ENCODE measurements at regions of chr5 and their contacts with region 1.

Region 1: GRCh38 chr5:179697993-179698934 is 503 bp upstream of the CANX start:
- DNase-seq: peak; percentile 99
- ATAC-seq: peak; percentile 92
- H3K4me3 Mint-ChIP-seq: peak overlapping the region; percentile 89
- H3K27ac Mint-ChIP-seq: peak overlapping the region; percentile 94
- H3K4me1 Mint-ChIP-seq: peaks cover 32% of the 10 kb centered on the region
- H3K27me3 Mint-ChIP-seq: no peaks in the 10 kb centered on the region

Region 2: DNA sequence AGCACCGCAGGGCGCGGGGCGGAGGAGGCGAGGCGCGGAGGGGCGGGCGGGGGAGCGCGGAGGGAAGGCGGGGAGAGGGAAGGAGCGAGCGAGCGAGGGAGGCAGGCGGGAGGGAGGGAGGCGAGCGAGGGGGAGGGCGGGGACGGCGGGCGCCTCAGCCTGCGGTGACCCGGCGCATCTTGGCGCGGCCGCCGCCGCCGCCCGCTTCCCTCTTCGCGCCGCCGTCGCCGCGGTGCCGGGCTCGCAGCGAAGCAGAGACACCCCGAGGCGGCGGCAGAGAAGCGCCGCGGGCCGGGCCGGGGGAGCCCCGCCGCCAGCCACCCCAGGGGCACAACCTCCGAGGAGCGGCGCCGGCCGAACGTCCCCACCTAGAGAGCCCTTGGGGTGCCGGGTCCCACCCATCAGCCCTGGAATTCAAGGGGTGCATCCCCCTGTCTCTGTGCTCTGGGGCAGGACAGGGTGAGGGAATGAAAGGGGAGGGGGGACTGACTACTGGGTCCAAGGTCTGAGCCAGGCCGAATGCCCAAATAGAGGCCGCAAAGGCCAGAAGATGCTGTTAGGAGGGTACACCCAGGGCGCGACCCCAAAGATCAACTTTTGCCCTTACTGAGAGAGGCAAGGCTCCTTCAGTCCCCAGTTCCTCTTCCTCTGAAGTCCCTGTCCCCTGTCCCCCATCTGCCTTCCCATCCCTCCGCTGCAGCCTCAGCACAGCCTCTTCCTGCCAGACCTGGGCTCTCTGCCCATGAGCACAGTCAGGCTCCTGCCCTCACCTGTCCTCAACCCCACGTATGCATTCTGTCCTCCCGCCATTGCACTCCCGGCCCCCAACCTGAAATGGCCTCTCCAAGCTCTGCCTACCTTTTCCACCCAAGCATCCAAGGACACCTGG is 352.6 kb before region 1 on chr5 and contains the start of gene ADAMTS2:
- CTCF ChIA-PET with region 1: no interaction called
- POLR2A ChIA-PET with region 1: no interaction called
- DNase-seq: peak; percentile 22
- ATAC-seq: peak; percentile 50
- H3K4me3 Mint-ChIP-seq: peak within 1 kb of the TSS; percentile 42
- H3K27ac Mint-ChIP-seq: no peak within 1 kb of the TSS
- H3K4me1 Mint-ChIP-seq: peaks cover 5% of the 10 kb centered on the region
- H3K27me3 Mint-ChIP-seq: peaks cover 50% of the 10 kb centered on the region
- total RNA-seq, gene ADAMTS2: not detected

Region 3: DNA sequence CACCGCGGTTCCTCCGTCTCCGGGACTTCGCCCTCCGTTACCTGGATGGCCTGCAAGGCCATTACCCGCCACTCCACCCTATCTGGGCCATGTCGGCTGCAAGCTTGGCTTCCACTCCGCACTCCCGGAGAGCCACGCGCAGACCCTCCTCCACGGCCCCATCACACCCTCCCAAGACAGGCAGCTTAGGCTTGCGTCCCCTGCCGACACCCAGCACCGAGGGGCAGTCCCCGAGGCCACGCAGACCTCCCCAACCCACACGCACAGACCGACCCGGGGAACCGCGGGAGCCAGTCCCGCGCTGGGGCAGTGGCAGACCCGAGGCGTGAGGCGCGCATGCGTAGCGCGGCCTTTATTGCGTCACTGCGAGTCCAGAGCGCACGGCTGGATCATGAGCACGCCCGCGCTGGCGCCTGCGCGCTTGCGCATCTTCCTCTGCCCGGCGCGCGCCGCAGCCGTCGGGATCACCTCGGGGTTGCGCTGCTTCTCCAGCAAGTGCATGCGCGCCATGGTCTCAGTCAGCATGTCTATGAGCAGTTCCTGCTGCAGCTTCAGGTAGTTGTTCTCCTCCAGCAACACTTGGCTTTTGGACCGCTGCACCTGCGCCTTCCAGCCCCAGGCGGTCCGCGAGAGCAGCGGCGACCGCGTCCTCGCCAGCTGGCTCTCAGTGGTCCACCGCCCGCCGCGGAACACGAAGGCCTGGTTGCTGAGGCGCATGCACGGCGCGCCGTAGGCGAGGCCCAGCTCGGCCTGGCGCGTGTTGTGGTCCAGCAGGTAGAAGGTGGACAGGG is 19.8 kb before region 1 on chr5:
- CTCF ChIA-PET with region 1: interaction called, 5 read pairs
- POLR2A ChIA-PET with region 1: interaction called, 22 read pairs
- DNase-seq: peak; percentile 96
- ATAC-seq: peak; percentile 91
- H3K4me3 Mint-ChIP-seq: peak overlapping the region; percentile 95
- H3K27ac Mint-ChIP-seq: peak overlapping the region; percentile 97
- H3K4me1 Mint-ChIP-seq: peaks cover 35% of the 10 kb centered on the region
- H3K27me3 Mint-ChIP-seq: no peaks in the 10 kb centered on the region

Region 4: DNA sequence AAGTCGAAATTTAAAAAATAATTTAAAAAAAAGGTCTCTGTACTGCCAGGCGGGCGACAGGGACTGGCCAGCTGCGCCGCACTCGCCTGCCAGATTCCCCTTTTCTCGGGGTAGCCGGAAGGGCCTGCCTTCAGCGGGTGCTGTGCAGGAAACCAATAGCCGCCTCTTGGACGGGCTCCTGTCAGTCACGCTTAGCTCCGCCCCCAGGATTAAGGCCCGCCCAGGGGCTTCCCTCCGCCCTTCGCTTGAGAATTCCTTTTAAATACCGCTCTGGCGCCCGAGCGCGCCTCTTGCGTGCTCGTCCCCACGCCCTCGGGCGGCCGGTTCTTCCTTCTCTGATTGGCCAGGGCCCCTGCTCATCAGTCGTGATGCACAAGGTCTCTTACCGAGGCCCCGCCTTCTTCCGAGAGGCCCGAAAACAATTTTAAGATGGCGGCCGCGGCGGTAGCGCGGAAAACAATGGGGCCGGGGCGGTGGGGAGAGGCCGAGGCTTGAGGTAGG is 34.2 kb after region 1 on chr5 and contains the start of gene MAML1:
- CTCF ChIA-PET with region 1: interaction called, 5 read pairs
- POLR2A ChIA-PET with region 1: interaction called, 13 read pairs
- DNase-seq: peak; percentile 100
- ATAC-seq: peak; percentile 98
- H3K4me3 Mint-ChIP-seq: peak within 1 kb of the TSS; percentile 97
- H3K27ac Mint-ChIP-seq: peak within 1 kb of the TSS; percentile 90
- H3K4me1 Mint-ChIP-seq: peaks cover 33% of the 10 kb centered on the region
- H3K27me3 Mint-ChIP-seq: no peaks in the 10 kb centered on the region
- total RNA-seq, gene MAML1: 28.9 to 30.0 TPM